Endothelial cell of umbilical vein (primary cell): ENCODE measurements at regions of chr2 and their contacts with region 1.

Region 1: GRCh38 chr2:74566754-74567085 is 12.2 kb downstream of the DOK1 start:
- DNase-seq: no peak
- H3K4me3 ChIP-seq: no peak overlapping the region
- H3K27ac ChIP-seq: no peak overlapping the region
- H3K4me1 ChIP-seq: no peaks in the 10 kb centered on the region
- H3K27me3 ChIP-seq: peaks cover 16 to 19% of the 10 kb centered on the region in 2 experiments
- CTCF ChIP-seq: no peak
- POLR2A ChIP-seq: no peak

Region 2: DNA sequence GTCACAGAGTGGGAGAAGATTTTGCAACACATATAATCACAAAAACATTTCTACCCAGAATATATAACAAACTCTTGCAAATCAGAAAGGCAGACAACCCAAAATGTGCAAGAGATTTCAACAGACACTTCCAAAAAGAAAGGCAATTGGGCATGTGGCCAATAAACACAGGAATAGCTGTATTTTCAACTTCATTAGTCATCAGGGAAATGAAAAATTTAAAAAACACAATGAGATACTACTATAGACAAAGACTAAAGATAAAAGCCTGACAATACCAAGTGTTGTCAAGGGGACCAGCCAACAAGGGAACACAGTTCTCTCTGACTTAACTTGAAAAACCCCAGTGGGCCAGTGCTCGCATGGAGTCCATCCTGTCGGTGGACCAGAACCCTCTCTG is 327.8 kb before region 1 on chr2:
- CTCF ChIA-PET with region 1: no interaction called
- POLR2A ChIA-PET with region 1: no interaction called
- dilution Hi-C with region 1: no loop called
- intact Hi-C with region 1: no loop called
- DNase-seq: peak; percentile 8
- H3K4me3 ChIP-seq: no peak overlapping the region
- H3K27ac ChIP-seq: no peak overlapping the region
- H3K4me1 ChIP-seq: no peaks in the 10 kb centered on the region
- H3K27me3 ChIP-seq: no peaks in the 10 kb centered on the region
- CTCF ChIP-seq: no peak
- POLR2A ChIP-seq: no peak

Region 3: GRCh38 chr2:74587664-74588277 is 21.1 kb after region 1 on chr2:
- CTCF ChIA-PET with region 1: interaction called, 14 read pairs
- POLR2A ChIA-PET with region 1: no interaction called
- dilution Hi-C with region 1: no loop called
- intact Hi-C with region 1: no loop called
- DNase-seq: peak; percentile 73
- H3K4me3 ChIP-seq: no peak overlapping the region
- H3K27ac ChIP-seq: no peak overlapping the region
- H3K4me1 ChIP-seq: no peaks in the 10 kb centered on the region
- H3K27me3 ChIP-seq: peaks cover 21 to 38% of the 10 kb centered on the region in 2 experiments
- CTCF ChIP-seq: peak; percentile 51 to 54
- POLR2A ChIP-seq: no peak